ENCODE measurements at regions of chr1 and their contacts with region 1.

Region 1: GRCh38 chr1:9874959-9875635 is 35.0 kb downstream of the CTNNBIP1 start:
- DNase-seq: no peak
- ATAC-seq: peak; percentile 94
- H3K4me3 ChIP-seq: peak overlapping the region; percentile 19 to 50; a peak in 3 of 4 replicates
- H3K27ac ChIP-seq: peak overlapping the region; percentile 57; the same call in 1 of the 2 replicates
- H3K4me1 ChIP-seq: peaks cover 6% of the 10 kb centered on the region; the same call in 1 of the 2 replicates
- H3K27me3 ChIP-seq: no peaks in the 10 kb centered on the region
- CTCF ChIP-seq: peak; percentile 97

Region 2: GRCh38 chr1:9823943-9824701 is 51.0 kb before region 1 on chr1 and contains the start of gene CLSTN1:
- CTCF ChIA-PET with region 1: no interaction called
- POLR2A ChIA-PET with region 1: no interaction called
- in situ Hi-C with region 1: no loop called
- intact Hi-C with region 1: no loop called
- DNase-seq: no peak
- ATAC-seq: peak; percentile 91
- H3K4me3 ChIP-seq: peak within 1 kb of the TSS; percentile 61 to 82
- H3K27ac ChIP-seq: peak within 1 kb of the TSS; percentile 76
- H3K4me1 ChIP-seq: peaks cover 25% of the 10 kb centered on the region
- H3K27me3 ChIP-seq: no peaks in the 10 kb centered on the region
- CTCF ChIP-seq: no peak
- total RNA-seq, gene CLSTN1: 143 TPM

Region 3: GRCh38 chr1:9914610-9914937 is 39.5 kb after region 1 on chr1:
- CTCF ChIA-PET with region 1: interaction called, 14 read pairs
- POLR2A ChIA-PET with region 1: interaction called, 4 read pairs
- in situ Hi-C with region 1: no loop called
- intact Hi-C with region 1: no loop called
- DNase-seq: no peak
- ATAC-seq: no peak
- H3K4me3 ChIP-seq: no peak overlapping the region
- H3K27ac ChIP-seq: no peak overlapping the region
- H3K4me1 ChIP-seq: no peaks in the 10 kb centered on the region
- H3K27me3 ChIP-seq: no peaks in the 10 kb centered on the region
- CTCF ChIP-seq: no peak